ENCODE measurements at regions of chr11 and their contacts with region 1.

Region 1: GRCh38 chr11:68889948-68890446 is 13.6 kb downstream of the MRPL21 start:
- DNase-seq: peak; percentile 57 to 84
- H3K4me3 ChIP-seq: no peak overlapping the region
- H3K27ac ChIP-seq: no peak overlapping the region
- H3K4me1 ChIP-seq: peaks cover 0 to 4% (median under 1%) of the 10 kb centered on the region in 4 experiments; a peak in 1 of 7 replicates
- H3K27me3 ChIP-seq: no peaks in the 10 kb centered on the region
- CTCF ChIP-seq: peak; percentile 74 to 77 (median 74)
- EP300 ChIP-seq: no peak
- POLR2A ChIP-seq: no peak
- RAD21 ChIP-seq: peak; percentile 65 to 77

Region 2: DNA sequence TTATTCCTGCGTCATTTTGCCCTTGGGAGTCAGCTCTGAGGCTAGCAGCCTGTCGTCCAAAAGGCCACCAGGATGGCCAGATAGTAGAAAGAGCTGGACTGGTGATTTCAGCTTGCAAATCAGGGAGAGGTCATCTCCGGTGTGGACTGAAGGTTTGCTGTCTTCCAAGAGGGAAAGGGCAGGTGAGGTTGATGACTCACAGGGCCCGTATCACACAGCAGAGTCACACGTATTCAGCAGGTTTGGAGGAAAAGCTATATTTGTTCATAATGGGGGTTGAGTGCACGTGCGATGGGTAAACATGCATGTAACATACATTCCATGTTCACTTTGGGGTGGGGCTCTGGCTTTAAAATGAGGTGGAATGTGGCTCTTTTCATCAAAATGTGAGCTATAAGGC is 12.0 kb before region 1 on chr11:
- CTCF ChIA-PET with region 1: interaction called, 17 read pairs
- POLR2A ChIA-PET with region 1: interaction called, 8 read pairs
- DNase-seq: no peak
- H3K4me3 ChIP-seq: no peak overlapping the region
- H3K27ac ChIP-seq: no peak overlapping the region
- H3K4me1 ChIP-seq: no peaks in the 10 kb centered on the region; a peak in 2 of 7 replicates
- H3K27me3 ChIP-seq: no peaks in the 10 kb centered on the region
- CTCF ChIP-seq: no peak
- EP300 ChIP-seq: no peak
- POLR2A ChIP-seq: no peak
- RAD21 ChIP-seq: no peak